ENCODE measurements at regions of chr15 and their contacts with region 1.

Region 1: DNA sequence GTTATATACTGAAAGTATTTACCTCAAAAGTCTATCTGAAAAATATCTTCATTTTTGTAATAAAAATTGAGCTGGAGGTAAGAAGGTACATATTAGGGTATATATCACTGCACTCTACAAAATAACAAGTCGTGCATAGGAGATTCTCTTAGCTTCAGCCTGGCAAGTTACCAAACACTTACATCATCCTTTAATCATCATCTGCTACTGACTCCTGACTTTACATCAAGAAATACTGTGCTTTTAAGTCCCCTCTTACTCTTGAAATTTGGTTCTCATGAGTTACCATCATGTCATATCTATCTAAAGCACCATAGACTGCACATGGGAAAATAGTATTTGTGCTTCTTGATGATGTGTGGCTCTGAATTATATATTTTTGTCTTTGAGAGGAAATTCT is 50.8 kb downstream of the LYSMD4 start:
- DNase-seq: no peak
- ATAC-seq: peak in 2 of 4 donors; percentile 62 to 64
- H3K4me3 ChIP-seq: no peak overlapping the region
- H3K27ac ChIP-seq: peak overlapping the region in 11 of 12 donors; percentile 6 to 80 (median 66)
- H3K4me1 ChIP-seq: peaks cover 3 to 32% (median 20%) of the 10 kb centered on the region in 12 donors
- H3K27me3 ChIP-seq: no peaks in the 10 kb centered on the region
- CTCF ChIP-seq: no peak
- POLR2A ChIP-seq: no peak

Region 2: DNA sequence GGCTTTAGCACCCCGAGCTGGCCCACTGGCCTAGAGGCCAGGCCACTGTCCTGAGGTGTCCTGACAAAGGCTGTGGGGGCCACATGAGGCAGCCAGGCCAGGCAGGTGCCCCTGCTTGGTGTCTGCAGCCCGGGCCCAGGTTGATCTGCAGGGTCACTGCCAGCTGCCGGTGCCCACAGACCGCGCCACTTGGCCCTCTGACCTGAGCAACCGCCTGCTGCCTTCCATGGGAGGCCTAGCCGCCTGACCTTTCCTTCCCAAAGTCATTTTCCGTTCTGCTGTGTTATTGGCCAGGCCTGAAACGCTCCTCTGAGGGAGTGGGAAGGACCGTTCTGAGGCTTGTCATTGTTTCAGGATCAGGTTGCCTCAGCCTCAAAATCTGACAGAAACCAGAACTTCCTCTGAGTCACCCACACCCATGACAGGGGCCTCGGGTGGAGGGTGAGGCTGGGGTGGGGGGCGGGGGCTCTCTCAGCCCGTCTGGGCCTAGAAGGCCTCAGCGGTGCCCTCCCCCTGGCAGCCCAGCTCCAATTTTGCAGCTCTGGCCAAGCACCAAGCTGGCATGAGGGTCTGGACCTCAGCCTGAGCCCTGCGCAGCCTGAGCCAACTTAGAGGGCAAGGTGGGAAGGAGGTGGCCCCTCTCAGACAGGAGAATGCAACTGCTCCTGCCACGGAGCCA is 257.3 kb before region 1 on chr15:
- intact Hi-C with region 1: loop called in 1 of 10 experiments (anchors 5 kb)
- DNase-seq: peak in 4 of 5 donors; percentile 55 to 78 (median 76)
- ATAC-seq: peak; percentile 75 to 94 (median 90)
- H3K4me3 ChIP-seq: peak overlapping the region in 1 of 12 donors; percentile 9
- H3K27ac ChIP-seq: peak overlapping the region; percentile 80 to 96 (median 90)
- H3K4me1 ChIP-seq: peaks cover 8 to 38% (median 25%) of the 10 kb centered on the region in 12 donors
- H3K27me3 ChIP-seq: no peaks in the 10 kb centered on the region
- CTCF ChIP-seq: no peak
- POLR2A ChIP-seq: peak in 1 of 2 donors; percentile 21

Region 3: DNA sequence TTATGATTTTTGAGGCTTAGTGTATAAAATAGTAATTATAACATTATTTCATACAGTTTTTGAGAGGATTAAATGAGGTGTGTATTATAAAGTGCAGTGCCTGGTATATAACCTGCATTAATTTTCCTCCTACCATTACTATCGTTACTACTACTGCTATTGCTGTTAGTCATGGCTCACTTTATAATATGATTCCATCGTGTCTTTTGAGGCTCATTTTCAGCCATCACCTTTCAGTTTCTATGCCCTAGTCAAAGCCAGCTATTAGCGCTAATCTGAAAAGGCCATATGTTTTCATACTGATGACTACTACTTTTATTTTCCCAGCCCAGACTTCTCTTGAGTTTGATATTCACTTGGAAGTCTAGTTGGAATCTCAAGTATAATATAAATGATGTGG is 111.2 kb before region 1 on chr15:
- intact Hi-C with region 1: loop called in 4 of 10 experiments (anchors 5 to 10 kb)
- DNase-seq: no peak
- ATAC-seq: no peak
- H3K4me3 ChIP-seq: no peak overlapping the region
- H3K27ac ChIP-seq: peak overlapping the region in 2 of 12 donors; percentile 6
- H3K4me1 ChIP-seq: peaks cover 11 to 87% (median 63%) of the 10 kb centered on the region in 12 donors
- H3K27me3 ChIP-seq: no peaks in the 10 kb centered on the region
- CTCF ChIP-seq: no peak
- POLR2A ChIP-seq: no peak

Region 4: DNA sequence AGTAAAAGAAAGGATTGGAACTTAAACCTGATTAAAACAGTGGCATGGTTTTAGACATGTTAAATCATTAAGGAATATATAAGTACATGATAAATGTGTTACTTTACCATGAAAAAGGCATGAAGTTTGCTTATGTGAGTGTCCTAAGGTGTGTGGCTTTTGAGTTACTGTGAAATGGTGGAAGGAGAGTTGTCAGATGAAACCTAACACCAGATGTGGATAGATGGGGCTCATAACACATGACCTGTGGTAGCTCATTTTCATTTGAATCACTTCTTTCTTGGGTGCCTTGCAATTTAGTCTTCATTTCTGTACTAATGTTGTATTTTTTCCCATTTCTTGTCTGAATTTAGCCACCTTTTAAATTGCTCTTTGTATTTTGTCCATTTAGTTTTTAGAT is 103.6 kb before region 1 on chr15:
- intact Hi-C with region 1: loop called in 2 of 10 experiments (anchors 5 to 10 kb)
- DNase-seq: no peak
- ATAC-seq: no peak
- H3K4me3 ChIP-seq: no peak overlapping the region
- H3K27ac ChIP-seq: peak overlapping the region in 2 of 12 donors; percentile 8 to 12
- H3K4me1 ChIP-seq: peaks cover 13 to 98% (median 75%) of the 10 kb centered on the region in 12 donors
- H3K27me3 ChIP-seq: no peaks in the 10 kb centered on the region
- CTCF ChIP-seq: no peak
- POLR2A ChIP-seq: no peak

Region 5: GRCh38 chr15:99592145-99592791 is 90.2 kb before region 1 on chr15:
- intact Hi-C with region 1: loop called in 1 of 10 experiments (anchors 5 kb)
- DNase-seq: no peak
- ATAC-seq: peak in 3 of 4 donors; percentile 11 to 52 (median 34)
- H3K4me3 ChIP-seq: no peak overlapping the region
- H3K27ac ChIP-seq: peak overlapping the region in 2 of 12 donors; percentile 8 to 29
- H3K4me1 ChIP-seq: peaks cover 11 to 82% (median 51%) of the 10 kb centered on the region in 12 donors
- H3K27me3 ChIP-seq: no peaks in the 10 kb centered on the region
- CTCF ChIP-seq: no peak
- POLR2A ChIP-seq: no peak

Region 6: DNA sequence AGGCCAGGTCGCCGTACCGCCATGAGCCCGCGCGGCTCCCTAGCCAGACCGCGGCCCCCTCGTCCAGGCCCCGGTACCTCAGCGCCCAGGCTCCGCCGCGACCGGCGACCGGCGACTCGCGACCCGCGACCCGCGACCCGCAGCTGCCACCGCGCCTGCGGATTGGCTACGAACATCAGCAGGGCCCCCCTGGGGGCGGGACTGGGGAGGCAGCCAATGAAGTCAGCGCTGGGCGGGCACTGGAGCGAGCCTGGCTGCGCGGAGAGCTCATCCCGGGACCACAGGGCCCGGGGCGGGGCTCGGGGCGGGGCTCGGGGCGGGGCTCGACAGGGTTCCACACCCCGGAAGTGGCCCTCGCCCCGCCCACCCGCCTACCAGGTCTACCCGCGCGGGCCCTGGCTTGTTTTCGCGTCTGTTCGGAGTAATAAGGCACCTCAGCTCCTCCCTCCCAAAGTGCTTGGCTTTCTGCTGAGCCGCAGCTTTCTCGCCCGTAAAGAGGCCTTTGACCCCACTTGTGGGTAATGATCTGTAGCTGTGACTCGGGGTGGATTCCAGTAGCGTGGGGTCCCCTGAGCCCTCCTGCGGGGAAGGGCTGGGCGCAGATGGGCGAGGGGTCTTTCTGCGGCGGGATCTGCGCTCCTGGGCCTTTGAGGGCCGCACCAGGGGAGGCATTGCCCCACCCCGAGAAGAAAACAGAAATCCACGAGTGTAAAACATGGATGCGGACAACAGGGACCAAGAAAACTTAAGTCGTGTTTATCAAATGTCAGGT is 51.0 kb after region 1 on chr15 and contains the start of gene LYSMD4:
- intact Hi-C with region 1: no loop called
- DNase-seq: peak; percentile 98 to 99 (median 99)
- ATAC-seq: peak; percentile 98 to 99 (median 99)
- H3K4me3 ChIP-seq: peak within 1 kb of the TSS; percentile 55 to 99 (median 96)
- H3K27ac ChIP-seq: peak within 1 kb of the TSS; percentile 49 to 94 (median 84)
- H3K4me1 ChIP-seq: peaks cover 0 to 42% (median 19%) of the 10 kb centered on the region in 12 donors
- H3K27me3 ChIP-seq: no peaks in the 10 kb centered on the region
- CTCF ChIP-seq: no peak
- POLR2A ChIP-seq: peak in 1 of 2 donors; percentile 91
- total RNA-seq, gene LYSMD4: 8.3 to 12.8 (median 10.3) TPM

Region 7: GRCh38 chr15:100152463-100152862 is 470.0 kb after region 1 on chr15:
- intact Hi-C with region 1: no loop called
- DNase-seq: peak in 1 of 5 donors; percentile 50
- ATAC-seq: peak in 3 of 4 donors; percentile 45 to 70 (median 47)
- H3K4me3 ChIP-seq: no peak overlapping the region
- H3K27ac ChIP-seq: no peak overlapping the region
- H3K4me1 ChIP-seq: no peaks in the 10 kb centered on the region
- H3K27me3 ChIP-seq: no peaks in the 10 kb centered on the region
- CTCF ChIP-seq: no peak
- POLR2A ChIP-seq: no peak